Ovary (tissue), 10 donors: ENCODE measurements at regions of chr6 and their contacts with region 1.

Region 1: DNA sequence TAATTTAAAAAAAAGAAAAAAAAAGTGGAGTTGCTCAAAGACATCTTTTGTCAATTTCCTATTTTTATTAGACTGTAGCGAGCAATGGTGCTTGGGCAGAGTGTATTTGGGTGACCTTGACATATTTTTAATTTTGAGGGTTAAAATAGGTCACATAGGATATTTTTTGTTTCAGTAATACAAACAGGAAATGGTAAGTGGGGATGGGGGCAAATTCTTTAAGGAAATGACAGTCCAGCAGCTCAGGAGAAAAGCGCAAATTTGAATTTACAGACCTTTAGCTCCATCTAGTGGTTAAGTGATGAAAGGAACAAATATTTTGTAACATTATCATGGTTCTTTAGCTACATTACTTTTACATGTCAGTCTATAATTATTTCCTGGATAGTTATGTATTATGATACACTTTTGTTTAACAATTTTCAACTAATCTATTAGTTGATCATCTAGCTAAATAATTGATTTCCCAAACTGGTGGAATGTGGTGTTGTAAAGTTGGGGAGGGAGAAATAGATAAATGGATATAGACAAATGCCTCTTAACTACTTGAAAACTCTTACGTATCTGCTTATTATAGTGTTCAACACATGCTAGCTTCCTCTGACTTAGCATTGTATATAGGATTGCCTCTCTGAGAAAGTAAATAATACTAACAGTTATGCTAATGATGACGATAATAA is 10.0 kb downstream of the CITED2 start:
- DNase-seq: no peak
- H3K4me3 ChIP-seq: no peak overlapping the region
- H3K27ac ChIP-seq: no peak overlapping the region
- H3K4me1 ChIP-seq: peaks cover 2% of the 10 kb centered on the region
- H3K27me3 ChIP-seq: no peaks in the 10 kb centered on the region
- CTCF ChIP-seq: peak; percentile 50 to 90 (median 85)
- EP300 ChIP-seq: no peak
- POLR2A ChIP-seq: no peak

Region 2: DNA sequence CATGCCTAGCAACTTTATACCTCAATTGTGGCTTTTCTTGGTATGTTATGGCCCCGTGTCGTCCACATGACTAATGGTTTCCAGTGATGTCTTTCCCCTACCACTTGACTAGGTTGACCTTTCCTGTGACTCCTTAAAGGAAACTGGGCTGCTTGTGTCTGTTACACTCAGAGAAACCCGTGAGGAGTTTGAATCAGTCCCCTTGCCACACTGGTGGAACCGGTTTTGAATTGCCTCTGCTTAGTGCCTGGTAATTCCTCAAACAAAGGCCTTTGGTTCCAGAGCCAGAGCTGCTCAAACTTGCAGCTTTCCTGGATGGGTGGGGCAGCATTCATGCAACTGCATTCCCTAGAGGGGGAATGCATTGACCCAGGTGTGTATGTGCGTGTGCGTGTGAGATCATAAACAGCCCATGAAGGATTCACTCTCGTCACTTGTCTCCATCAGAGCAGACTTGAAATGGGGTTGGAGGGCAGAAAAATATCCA is 546.6 kb before region 1 on chr6:
- intact Hi-C with region 1: loop called (anchors 10 kb)
- DNase-seq: no peak
- H3K4me3 ChIP-seq: no peak overlapping the region
- H3K27ac ChIP-seq: no peak overlapping the region
- H3K4me1 ChIP-seq: no peaks in the 10 kb centered on the region
- H3K27me3 ChIP-seq: no peaks in the 10 kb centered on the region
- CTCF ChIP-seq: no peak
- EP300 ChIP-seq: no peak
- POLR2A ChIP-seq: no peak

Region 3: GRCh38 chr6:138970856-138971425 is 393.5 kb before region 1 on chr6:
- intact Hi-C with region 1: loop called in 1 of 4 experiments (anchors 10 kb)
- DNase-seq: no peak
- H3K4me3 ChIP-seq: no peak overlapping the region
- H3K27ac ChIP-seq: no peak overlapping the region
- H3K4me1 ChIP-seq: peaks cover 7% of the 10 kb centered on the region
- H3K27me3 ChIP-seq: no peaks in the 10 kb centered on the region
- CTCF ChIP-seq: no peak
- EP300 ChIP-seq: no peak
- POLR2A ChIP-seq: no peak

Region 4: GRCh38 chr6:139016337-139017213 is 347.9 kb before region 1 on chr6:
- intact Hi-C with region 1: no loop called
- DNase-seq: no peak
- H3K4me3 ChIP-seq: no peak overlapping the region
- H3K27ac ChIP-seq: no peak overlapping the region
- H3K4me1 ChIP-seq: peaks cover 5% of the 10 kb centered on the region
- H3K27me3 ChIP-seq: no peaks in the 10 kb centered on the region
- CTCF ChIP-seq: no peak
- EP300 ChIP-seq: no peak
- POLR2A ChIP-seq: no peak

Region 5: GRCh38 chr6:139134817-139135581 is 229.4 kb before region 1 on chr6 and contains the start of gene HECA:
- intact Hi-C with region 1: loop called in 2 of 4 experiments (anchors 10 kb)
- DNase-seq: peak; percentile 99
- H3K4me3 ChIP-seq: peak within 1 kb of the TSS; percentile 87
- H3K27ac ChIP-seq: peak within 1 kb of the TSS; percentile 97 to 98
- H3K4me1 ChIP-seq: peaks cover 15% of the 10 kb centered on the region
- H3K27me3 ChIP-seq: no peaks in the 10 kb centered on the region
- CTCF ChIP-seq: peak in 2 of 3 donors; percentile 45 to 49
- EP300 ChIP-seq: peak; percentile 61
- POLR2A ChIP-seq: peak; percentile 87
- total RNA-seq, gene HECA: 19.9 to 41.7 (median 23.6) TPM

Region 6: GRCh38 chr6:139219746-139220145 is 144.7 kb before region 1 on chr6:
- intact Hi-C with region 1: loop called in 1 of 4 experiments (anchors 10 kb)
- DNase-seq: no peak
- H3K4me3 ChIP-seq: no peak overlapping the region
- H3K27ac ChIP-seq: peak overlapping the region in 1 of 2 donors; percentile 68
- H3K4me1 ChIP-seq: no peaks in the 10 kb centered on the region
- H3K27me3 ChIP-seq: no peaks in the 10 kb centered on the region
- CTCF ChIP-seq: no peak
- EP300 ChIP-seq: no peak
- POLR2A ChIP-seq: no peak

Region 7: DNA sequence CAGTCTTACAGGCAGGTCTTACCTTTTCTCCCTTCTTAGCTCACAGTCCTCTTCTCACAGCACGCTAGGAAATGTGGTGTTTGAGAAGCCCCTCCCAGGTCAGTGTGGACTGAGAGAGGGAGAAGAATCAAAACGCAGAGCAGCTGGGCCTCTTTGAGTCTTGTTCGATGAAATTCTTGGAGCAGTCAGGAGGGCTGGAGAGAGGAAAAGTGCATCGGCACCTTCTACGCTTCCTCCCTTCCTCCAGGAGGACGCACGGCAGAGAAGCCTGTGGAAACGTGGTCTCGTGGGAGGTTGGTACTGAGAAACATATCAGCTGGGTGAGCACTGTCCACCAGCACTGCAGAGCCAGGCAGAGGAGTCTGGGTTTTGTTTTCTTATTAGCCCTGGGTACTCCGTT is 125.4 kb before region 1 on chr6:
- intact Hi-C with region 1: loop called in 1 of 4 experiments (anchors 5 kb)
- DNase-seq: peak; percentile 39 to 46 (median 42)
- H3K4me3 ChIP-seq: no peak overlapping the region
- H3K27ac ChIP-seq: peak overlapping the region in 1 of 2 donors; percentile 82
- H3K4me1 ChIP-seq: peaks cover 6% of the 10 kb centered on the region
- H3K27me3 ChIP-seq: no peaks in the 10 kb centered on the region
- CTCF ChIP-seq: no peak
- EP300 ChIP-seq: no peak
- POLR2A ChIP-seq: no peak

Region 8: GRCh38 chr6:139291813-139292619 is 72.4 kb before region 1 on chr6 and contains the start of gene TXLNB:
- intact Hi-C with region 1: loop called in 1 of 4 experiments (anchors 10 kb)
- DNase-seq: peak; percentile 67 to 91 (median 82)
- H3K4me3 ChIP-seq: peak within 1 kb of the TSS; percentile 7
- H3K27ac ChIP-seq: peak within 1 kb of the TSS; percentile 3 to 73
- H3K4me1 ChIP-seq: peaks cover 10% of the 10 kb centered on the region
- H3K27me3 ChIP-seq: no peaks in the 10 kb centered on the region
- CTCF ChIP-seq: peak in 1 of 3 donors; percentile 15
- EP300 ChIP-seq: no peak
- POLR2A ChIP-seq: no peak
- total RNA-seq, gene TXLNB: 2.3 to 7.9 (median 3.4) TPM